Activated naive CD4-positive, alpha-beta T cell treated with anti-CD3 and anti-CD28 coated beads for 36 hours (primary cell): ENCODE measurements at regions of chr6 and their contacts with region 1.

Region 1: DNA sequence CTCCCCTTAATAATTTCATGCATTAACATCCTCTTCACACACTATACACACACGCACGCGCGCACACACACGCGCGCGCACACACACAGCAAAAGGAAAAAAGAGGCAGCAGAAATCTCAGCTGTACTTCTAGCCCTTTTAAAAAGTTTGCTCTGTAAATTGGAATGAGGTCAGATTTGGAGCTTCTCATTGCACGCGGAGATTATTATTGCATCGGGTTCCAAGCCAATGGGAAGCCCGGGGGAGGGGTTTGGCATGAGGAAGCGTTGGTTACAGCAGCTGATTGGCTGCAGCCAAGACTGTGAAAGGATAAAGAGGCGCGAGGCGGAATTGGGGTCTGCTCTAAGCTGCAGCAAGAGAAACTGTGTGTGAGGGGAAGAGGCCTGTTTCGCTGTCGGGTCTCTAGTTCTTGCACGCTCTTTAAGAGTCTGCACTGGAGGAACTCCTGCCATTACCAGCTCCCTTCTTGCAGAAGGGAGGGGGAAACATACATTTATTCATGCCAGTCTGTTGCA is at the start of gene SOX4:
- DNase-seq: peak; percentile 68
- H3K4me3 Mint-ChIP-seq: no peak within 1 kb of the TSS
- H3K27ac Mint-ChIP-seq: no peak within 1 kb of the TSS
- H3K4me1 Mint-ChIP-seq: peaks cover 22% of the 10 kb centered on the region
- H3K27me3 Mint-ChIP-seq: peaks cover 50% of the 10 kb centered on the region
- total RNA-seq, gene SOX4: 0.69 to 0.72 TPM

Region 2: GRCh38 chr6:20212392-20213217 is 1380.9 kb before region 1 on chr6 and contains the start of gene MBOAT1:
- CTCF ChIA-PET with region 1: no interaction called
- intact Hi-C with region 1: loop called (anchors 5 kb)
- DNase-seq: peak; percentile 71
- H3K4me3 Mint-ChIP-seq: peak within 1 kb of the TSS; percentile 83
- H3K27ac Mint-ChIP-seq: peak within 1 kb of the TSS; percentile 85
- H3K4me1 Mint-ChIP-seq: peaks cover 30% of the 10 kb centered on the region
- H3K27me3 Mint-ChIP-seq: no peaks in the 10 kb centered on the region
- total RNA-seq, gene MBOAT1: 6.3 to 7.3 TPM

Region 3: GRCh38 chr6:20564269-20564668 is 1029.2 kb before region 1 on chr6:
- CTCF ChIA-PET with region 1: interaction called, 35 read pairs
- intact Hi-C with region 1: loop called (anchors 1 kb)
- DNase-seq: no peak
- H3K4me3 Mint-ChIP-seq: no peak overlapping the region
- H3K27ac Mint-ChIP-seq: no peak overlapping the region
- H3K4me1 Mint-ChIP-seq: peaks cover 11% of the 10 kb centered on the region
- H3K27me3 Mint-ChIP-seq: no peaks in the 10 kb centered on the region

Region 4: GRCh38 chr6:20877008-20877937 is 716.2 kb before region 1 on chr6:
- CTCF ChIA-PET with region 1: interaction called, 3 read pairs
- intact Hi-C with region 1: loop called (anchors 2 kb)
- DNase-seq: peak; percentile 38
- H3K4me3 Mint-ChIP-seq: no peak overlapping the region
- H3K27ac Mint-ChIP-seq: no peak overlapping the region
- H3K4me1 Mint-ChIP-seq: peaks cover 9% of the 10 kb centered on the region
- H3K27me3 Mint-ChIP-seq: no peaks in the 10 kb centered on the region

Region 5: GRCh38 chr6:21527731-21528130 is 65.7 kb before region 1 on chr6:
- CTCF ChIA-PET with region 1: no interaction called
- intact Hi-C with region 1: loop called (anchors 1 kb)
- DNase-seq: no peak
- H3K4me3 Mint-ChIP-seq: no peak overlapping the region
- H3K27ac Mint-ChIP-seq: no peak overlapping the region
- H3K4me1 Mint-ChIP-seq: no peaks in the 10 kb centered on the region
- H3K27me3 Mint-ChIP-seq: peaks cover 2% of the 10 kb centered on the region

Region 6: DNA sequence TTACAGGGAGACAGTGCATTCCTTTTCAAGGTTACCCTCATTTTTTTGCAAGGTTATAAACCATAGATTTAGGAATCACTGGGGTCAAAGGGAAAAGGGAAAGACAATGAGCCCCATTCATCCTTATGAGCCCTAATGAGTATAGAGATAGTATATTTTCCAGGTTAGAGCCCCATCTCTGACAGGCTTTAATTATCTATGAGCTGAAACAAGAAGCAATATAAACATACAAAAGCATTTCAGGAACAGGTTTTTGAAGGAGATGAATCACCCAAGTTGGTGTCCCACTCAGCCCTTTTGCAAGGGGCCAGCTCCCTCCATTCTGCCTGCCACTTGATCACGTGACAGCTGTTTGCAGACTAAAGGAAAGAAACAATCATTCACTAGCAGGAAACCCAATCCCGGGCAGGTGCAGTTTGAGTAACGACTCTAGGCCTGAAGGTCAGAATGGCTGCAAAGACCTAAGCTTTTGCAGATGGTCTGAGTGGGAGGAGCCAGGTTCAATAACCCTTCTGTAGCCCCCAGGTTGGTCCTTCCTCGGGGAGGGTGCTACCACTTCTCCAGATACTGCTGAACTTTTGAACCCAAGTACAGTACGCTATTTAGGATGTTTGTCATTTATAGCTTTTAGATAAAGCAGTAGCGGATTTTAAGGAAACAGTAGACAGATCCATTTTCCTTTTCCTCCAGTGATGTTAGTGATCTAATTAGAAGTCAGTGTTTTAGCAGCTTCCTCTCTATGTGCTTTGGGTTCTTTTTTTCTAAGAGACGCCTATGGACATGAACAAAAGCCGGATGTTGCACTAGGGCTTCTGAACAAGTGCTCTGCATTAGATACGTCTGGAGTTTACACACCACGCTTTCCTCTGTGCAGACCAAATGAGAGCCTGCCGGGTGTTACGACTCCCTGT is 253.3 kb after region 1 on chr6:
- CTCF ChIA-PET with region 1: no interaction called
- intact Hi-C with region 1: loop called (anchors 10 kb)
- DNase-seq: peak; percentile 53
- H3K4me3 Mint-ChIP-seq: no peak overlapping the region
- H3K27ac Mint-ChIP-seq: no peak overlapping the region
- H3K4me1 Mint-ChIP-seq: peaks cover 5% of the 10 kb centered on the region
- H3K27me3 Mint-ChIP-seq: peaks cover 16% of the 10 kb centered on the region

Region 7: GRCh38 chr6:22062807-22063408 is 469.4 kb after region 1 on chr6:
- CTCF ChIA-PET with region 1: no interaction called
- intact Hi-C with region 1: loop called (anchors 5 kb)
- DNase-seq: peak; percentile 69
- H3K4me3 Mint-ChIP-seq: peak overlapping the region; percentile 61
- H3K27ac Mint-ChIP-seq: peak overlapping the region; percentile 55
- H3K4me1 Mint-ChIP-seq: peaks cover 16% of the 10 kb centered on the region
- H3K27me3 Mint-ChIP-seq: peaks cover 13% of the 10 kb centered on the region